Activated CD8-positive, alpha-beta T cell treated with anti-CD3 and anti-CD28 coated beads for 36 hours (primary cell): ENCODE measurements at regions of chr2 and their contacts with region 1.

Region 1: DNA sequence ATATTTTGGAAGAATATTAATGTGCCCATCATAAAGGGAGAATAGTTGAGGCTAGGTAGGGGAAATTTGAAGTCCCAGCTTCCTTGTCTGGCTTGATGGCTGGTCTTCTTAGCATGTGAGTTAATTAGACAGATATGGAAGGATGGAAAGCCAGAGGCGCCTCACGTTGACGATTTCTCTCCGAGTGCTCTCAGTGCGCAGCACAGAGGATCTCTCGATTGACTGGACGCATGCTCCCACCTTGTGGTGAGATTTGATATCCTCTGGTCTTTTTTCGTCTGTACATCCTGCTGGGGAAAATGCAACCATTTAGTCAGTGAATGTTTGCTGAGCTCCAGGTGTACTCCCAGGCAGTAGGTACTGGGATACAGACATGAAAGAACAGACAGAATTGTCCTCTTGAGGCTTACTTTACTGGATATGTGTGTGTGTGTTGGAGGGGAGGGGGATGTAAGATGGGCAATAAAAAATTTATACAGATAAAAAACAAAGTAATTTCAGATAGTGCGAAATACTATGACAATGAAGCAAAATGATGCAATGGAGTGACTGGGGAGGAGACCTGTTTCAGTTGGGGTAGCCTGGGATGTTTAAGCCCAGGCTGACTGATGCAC is 66.9 kb upstream of the ZNG1B start:
- DNase-seq: peak; percentile 79
- ATAC-seq: peak; percentile 97
- H3K4me3 Mint-ChIP-seq: no peak overlapping the region
- H3K27ac Mint-ChIP-seq: no peak overlapping the region
- H3K4me1 Mint-ChIP-seq: peaks cover 5% of the 10 kb centered on the region
- H3K27me3 Mint-ChIP-seq: peaks cover 4% of the 10 kb centered on the region
- CTCF ChIP-seq: peak; percentile 73

Region 2: GRCh38 chr2:113219889-113220641 is 150.5 kb before region 1 on chr2:
- CTCF ChIA-PET with region 1: no interaction called
- POLR2A ChIA-PET with region 1: no interaction called
- intact Hi-C with region 1: no loop called
- DNase-seq: no peak
- ATAC-seq: peak; percentile 60
- H3K4me3 Mint-ChIP-seq: no peak overlapping the region
- H3K27ac Mint-ChIP-seq: no peak overlapping the region
- H3K4me1 Mint-ChIP-seq: peaks cover 19% of the 10 kb centered on the region
- H3K27me3 Mint-ChIP-seq: no peaks in the 10 kb centered on the region
- CTCF ChIP-seq: no peak

Region 3: DNA sequence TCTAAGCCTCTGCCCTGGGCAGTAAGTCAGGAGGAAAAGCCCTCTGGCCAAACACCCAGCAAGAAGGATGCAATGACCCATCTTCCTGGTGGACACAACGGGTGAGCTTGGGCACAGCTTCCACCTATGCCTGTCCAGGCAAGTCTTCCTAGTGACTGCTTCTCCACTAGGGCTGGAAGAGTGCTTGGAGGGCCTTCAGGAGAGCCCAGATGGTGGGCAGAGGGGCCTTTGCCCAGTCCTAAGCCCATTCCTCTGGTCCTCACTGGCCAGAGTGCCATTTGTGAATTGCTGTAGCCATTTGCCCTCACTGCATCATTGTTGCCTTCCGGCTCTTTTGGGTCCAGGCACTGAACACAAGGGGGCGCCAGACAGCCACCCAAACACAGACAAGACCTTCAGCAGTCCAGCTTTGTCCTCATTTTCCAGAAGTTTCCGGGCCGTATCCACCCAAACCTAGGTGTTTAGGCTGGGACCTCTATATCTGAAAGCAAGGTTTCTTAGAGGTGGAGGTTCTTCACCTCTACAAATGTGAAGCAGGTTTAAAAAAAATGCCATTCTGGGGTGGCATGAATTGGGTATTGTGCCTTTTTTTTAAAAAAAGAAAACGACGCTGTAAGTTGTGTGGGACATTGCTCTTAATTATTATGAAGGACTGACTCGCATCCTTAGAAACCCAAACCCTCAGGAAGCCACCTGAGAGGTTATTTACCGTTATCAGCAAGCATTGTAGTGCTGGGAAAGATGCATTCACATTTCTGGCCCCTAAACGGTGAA is 121.4 kb before region 1 on chr2:
- CTCF ChIA-PET with region 1: interaction called, 62 read pairs
- POLR2A ChIA-PET with region 1: no interaction called
- intact Hi-C with region 1: loop called (anchors 2 kb)
- DNase-seq: peak; percentile 86
- ATAC-seq: peak; percentile 46
- H3K4me3 Mint-ChIP-seq: no peak overlapping the region
- H3K27ac Mint-ChIP-seq: peak overlapping the region; percentile 73
- H3K4me1 Mint-ChIP-seq: peaks cover 45% of the 10 kb centered on the region
- H3K27me3 Mint-ChIP-seq: no peaks in the 10 kb centered on the region
- CTCF ChIP-seq: peak; percentile 90

Region 4: DNA sequence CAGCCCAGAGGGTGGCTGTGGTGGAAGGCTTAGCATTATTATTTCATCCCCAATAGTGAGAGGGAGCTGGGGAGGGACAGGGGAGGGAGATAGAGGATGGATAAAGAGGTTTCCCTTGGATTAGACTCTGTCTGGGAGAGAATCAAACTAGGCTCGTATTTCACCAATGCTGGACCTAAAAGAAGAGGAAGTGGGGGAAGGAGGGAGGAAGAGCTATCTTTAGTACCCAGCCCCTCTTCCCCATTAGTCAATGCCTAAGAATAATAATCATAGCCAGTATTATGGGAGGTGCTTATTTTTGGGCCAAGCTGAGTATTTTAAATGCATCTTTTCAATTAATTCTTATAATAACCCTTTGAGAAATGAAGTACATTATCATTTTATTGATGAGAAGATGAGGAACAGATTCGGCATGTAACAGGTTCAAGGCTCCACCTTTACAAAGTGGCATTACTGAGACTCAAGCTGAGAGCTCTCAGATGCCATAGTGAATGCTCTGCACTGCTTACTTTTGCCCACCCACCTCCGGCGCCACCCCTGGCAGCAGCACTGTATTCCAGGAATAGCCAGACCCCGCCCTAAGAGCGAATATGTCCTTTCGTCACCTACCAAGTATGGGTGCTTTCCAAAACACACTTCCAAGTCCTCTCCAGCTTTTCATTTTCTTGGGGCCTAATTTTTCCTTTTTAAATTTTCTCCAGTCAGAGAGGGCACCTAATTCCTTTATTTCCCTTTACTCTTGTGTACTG is 112.9 kb before region 1 on chr2:
- CTCF ChIA-PET with region 1: interaction called, 12 read pairs
- POLR2A ChIA-PET with region 1: no interaction called
- intact Hi-C with region 1: no loop called
- DNase-seq: no peak
- ATAC-seq: no peak
- H3K4me3 Mint-ChIP-seq: no peak overlapping the region
- H3K27ac Mint-ChIP-seq: no peak overlapping the region
- H3K4me1 Mint-ChIP-seq: peaks cover 36% of the 10 kb centered on the region
- H3K27me3 Mint-ChIP-seq: no peaks in the 10 kb centered on the region
- CTCF ChIP-seq: no peak

Region 5: GRCh38 chr2:113273027-113273551 is 97.5 kb before region 1 on chr2:
- CTCF ChIA-PET with region 1: interaction called, 12 read pairs
- POLR2A ChIA-PET with region 1: no interaction called
- intact Hi-C with region 1: no loop called
- DNase-seq: peak; percentile 61
- ATAC-seq: peak; percentile 94
- H3K4me3 Mint-ChIP-seq: no peak overlapping the region
- H3K27ac Mint-ChIP-seq: no peak overlapping the region
- H3K4me1 Mint-ChIP-seq: peaks cover 19% of the 10 kb centered on the region
- H3K27me3 Mint-ChIP-seq: peaks cover 50% of the 10 kb centered on the region
- CTCF ChIP-seq: peak; percentile 42